Calu3 (cell line): ENCODE measurements at regions of chr1 and their contacts with region 1.

Region 1: DNA sequence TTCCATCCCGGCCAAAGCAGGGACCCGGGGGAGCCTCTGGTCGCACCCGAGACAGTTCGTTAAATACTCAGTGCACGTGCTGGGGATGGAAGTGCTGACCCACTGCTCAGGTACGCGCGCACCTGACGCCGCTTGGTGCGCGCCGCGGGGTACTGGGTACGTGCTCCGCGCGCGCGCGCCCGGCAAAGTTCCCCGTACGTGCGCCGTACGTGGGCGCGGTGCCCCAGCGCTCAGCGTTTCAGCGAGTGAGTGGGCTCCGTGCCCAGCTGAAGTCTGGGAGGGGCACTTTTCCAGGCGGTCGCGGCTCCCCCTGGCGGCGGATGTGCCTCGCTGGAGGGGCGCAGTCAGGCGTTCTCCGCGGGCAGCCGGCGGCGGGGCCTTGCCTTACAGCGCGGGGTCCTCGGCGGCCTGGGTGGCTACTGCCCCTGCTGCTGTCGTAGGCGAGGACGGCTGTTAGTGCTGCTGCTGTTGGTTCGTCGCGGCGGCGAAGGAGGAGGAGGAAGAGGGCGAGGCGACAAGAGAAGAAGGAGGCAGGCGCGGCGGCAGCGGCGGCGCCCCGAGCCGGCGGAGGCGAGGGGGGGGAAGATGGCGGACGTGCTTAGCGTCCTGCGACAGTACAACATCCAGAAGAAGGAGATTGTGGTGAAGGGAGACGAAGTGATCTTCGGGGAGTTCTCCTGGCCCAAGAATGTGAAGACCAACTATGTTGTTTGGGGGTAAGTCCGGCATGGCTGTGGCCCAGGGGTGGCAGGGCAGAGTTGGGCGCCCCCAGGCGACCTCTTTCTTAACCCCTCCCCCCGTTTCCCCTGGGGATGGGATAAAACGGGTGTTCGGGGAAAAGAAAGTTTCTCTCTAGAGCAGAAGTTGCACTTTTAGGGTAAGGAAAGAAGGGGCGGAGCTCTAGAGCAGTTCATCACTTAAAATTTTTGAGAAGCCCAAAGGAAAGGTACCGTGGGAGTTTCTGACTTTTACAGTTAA is at the start of gene CDC73:
- DNase-seq: peak; percentile 100
- H3K4me3 Mint-ChIP-seq: peak within 1 kb of the TSS; percentile 80
- H3K27ac Mint-ChIP-seq: peak within 1 kb of the TSS; percentile 84
- H3K4me1 Mint-ChIP-seq: peaks cover 25% of the 10 kb centered on the region
- H3K27me3 Mint-ChIP-seq: no peaks in the 10 kb centered on the region
- CTCF ChIP-seq: peak; percentile 94
- total RNA-seq, gene CDC73: 70.7 and 75.2 TPM in 2 replicates

Region 2: DNA sequence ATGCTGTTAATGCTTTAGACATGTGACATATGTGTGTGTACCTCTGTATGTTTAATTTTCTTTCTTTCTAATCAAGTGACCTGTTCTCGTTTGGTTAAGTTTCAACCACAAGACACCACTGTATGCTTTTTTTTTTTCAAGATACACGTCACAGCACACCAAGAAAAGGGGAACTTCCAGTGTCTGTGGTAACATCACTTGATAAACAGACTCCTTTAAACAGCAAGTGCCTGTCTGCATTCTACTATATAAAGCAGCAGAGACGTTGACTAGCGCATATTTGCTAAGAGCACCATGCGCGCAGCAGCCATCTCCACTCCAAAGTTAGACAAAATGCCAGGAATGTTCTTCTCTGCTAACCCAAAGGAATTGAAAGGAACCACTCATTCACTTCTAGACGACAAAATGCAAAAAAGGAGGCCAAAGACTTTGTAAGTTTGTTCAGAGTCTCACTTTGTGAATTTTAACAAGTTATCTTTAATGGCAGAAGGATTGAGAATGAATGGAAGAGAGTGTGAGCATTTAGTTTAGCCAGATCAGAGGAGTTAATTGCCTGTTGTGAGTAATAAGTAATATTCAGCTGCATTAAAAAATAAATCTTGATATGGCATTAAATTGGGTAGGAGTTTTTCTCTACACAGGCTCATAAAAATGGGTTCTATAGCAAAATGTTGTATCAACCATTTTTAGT is 546.3 kb before region 1 on chr1 and contains the start of gene RGS1:
- CTCF ChIA-PET with region 1: no interaction called
- intact Hi-C with region 1: no loop called
- DNase-seq: no peak
- H3K4me3 Mint-ChIP-seq: no peak within 1 kb of the TSS
- H3K27ac Mint-ChIP-seq: no peak within 1 kb of the TSS
- H3K4me1 Mint-ChIP-seq: no peaks in the 10 kb centered on the region
- H3K27me3 Mint-ChIP-seq: no peaks in the 10 kb centered on the region
- CTCF ChIP-seq: no peak
- total RNA-seq, gene RGS1: not detected in 2 replicates

Region 3: DNA sequence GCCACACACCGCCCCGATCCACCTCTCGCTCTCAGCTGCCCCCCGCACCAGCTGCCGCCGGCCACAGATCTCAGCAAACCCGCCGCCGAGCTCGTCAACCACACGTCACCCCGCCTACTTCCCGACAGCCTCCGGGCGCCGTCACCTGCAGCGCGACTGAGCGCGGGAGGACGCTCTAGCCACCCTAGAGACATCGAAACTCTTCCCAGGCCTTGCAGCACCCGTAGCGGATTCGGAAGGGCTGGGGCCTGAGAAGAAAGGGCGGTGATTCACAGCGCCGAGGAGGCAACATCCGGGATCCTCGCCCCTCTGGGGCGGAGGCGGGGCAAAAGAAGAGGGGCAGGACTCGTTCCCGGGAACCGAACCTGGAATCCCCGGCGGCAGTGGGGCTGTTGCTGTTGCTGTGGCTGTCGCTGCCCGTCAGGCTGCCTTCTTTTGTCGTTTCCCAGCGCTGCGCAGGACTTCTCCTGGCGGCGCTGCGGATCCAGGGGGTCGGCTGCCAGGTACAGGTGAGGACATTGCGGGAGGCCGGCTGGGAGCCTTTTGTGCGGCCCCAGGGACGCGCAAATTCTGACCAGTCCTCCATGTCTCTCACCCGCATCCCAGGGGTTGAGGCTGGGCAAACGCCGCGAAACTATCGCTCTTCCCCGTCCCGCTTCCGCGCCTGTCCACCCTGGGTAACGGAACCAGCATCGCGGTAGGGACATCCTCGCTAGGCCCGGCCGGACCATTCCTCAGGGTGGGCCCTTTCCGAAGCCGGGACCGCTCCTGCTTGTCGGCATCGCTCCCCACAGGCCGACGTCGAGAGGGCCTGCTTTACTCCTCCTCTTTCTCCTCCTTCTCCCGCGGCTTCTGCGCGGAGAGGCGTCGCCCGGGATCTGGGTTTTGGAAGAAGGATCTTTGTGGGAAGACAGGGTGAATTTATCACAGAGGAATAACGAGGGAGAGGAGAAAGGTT is 62.4 kb before region 1 on chr1 and contains the starts of genes RO60 and UCHL5:
- CTCF ChIA-PET with region 1: no interaction called
- intact Hi-C with region 1: loop called (anchors 5 kb)
- DNase-seq: peak; percentile 97
- H3K4me3 Mint-ChIP-seq: peak within 1 kb of the TSS; percentile 92
- H3K27ac Mint-ChIP-seq: peak within 1 kb of the TSS; percentile 90
- H3K4me1 Mint-ChIP-seq: peaks cover 25% of the 10 kb centered on the region
- H3K27me3 Mint-ChIP-seq: no peaks in the 10 kb centered on the region
- CTCF ChIP-seq: no peak
- total RNA-seq, gene RO60: 63.6 and 65.1 TPM in 2 replicates
- total RNA-seq, gene UCHL5: 69.9 and 73.7 TPM in 2 replicates

Region 4: GRCh38 chr1:193104906-193105820 is 16.7 kb before region 1 on chr1 and contains the start of gene GLRX2:
- CTCF ChIA-PET with region 1: interaction called, 8 read pairs
- intact Hi-C with region 1: loop called (anchors 2 kb)
- DNase-seq: peak; percentile 90
- H3K4me3 Mint-ChIP-seq: peak within 1 kb of the TSS; percentile 83
- H3K27ac Mint-ChIP-seq: peak within 1 kb of the TSS; percentile 76
- H3K4me1 Mint-ChIP-seq: peaks cover 17% of the 10 kb centered on the region
- H3K27me3 Mint-ChIP-seq: no peaks in the 10 kb centered on the region
- CTCF ChIP-seq: no peak
- total RNA-seq, gene GLRX2: 25.7 and 27.4 TPM in 2 replicates